Activated B cell treated with CpG ODN at 0.5 μM for 24 hours (primary cell): ENCODE measurements at regions of chr3 and their contacts with region 1.

Region 1: GRCh38 chr3:150681057-150681456 is 22.7 kb downstream of the ERICH6 start:
- DNase-seq: no peak
- ATAC-seq: peak; percentile 95
- H3K4me3 Mint-ChIP-seq: peak overlapping the region; percentile 80
- H3K27ac Mint-ChIP-seq: peak overlapping the region; percentile 66
- H3K4me1 Mint-ChIP-seq: peaks cover 29% of the 10 kb centered on the region
- H3K27me3 Mint-ChIP-seq: no peaks in the 10 kb centered on the region
- CTCF ChIP-seq: no peak

Region 2: DNA sequence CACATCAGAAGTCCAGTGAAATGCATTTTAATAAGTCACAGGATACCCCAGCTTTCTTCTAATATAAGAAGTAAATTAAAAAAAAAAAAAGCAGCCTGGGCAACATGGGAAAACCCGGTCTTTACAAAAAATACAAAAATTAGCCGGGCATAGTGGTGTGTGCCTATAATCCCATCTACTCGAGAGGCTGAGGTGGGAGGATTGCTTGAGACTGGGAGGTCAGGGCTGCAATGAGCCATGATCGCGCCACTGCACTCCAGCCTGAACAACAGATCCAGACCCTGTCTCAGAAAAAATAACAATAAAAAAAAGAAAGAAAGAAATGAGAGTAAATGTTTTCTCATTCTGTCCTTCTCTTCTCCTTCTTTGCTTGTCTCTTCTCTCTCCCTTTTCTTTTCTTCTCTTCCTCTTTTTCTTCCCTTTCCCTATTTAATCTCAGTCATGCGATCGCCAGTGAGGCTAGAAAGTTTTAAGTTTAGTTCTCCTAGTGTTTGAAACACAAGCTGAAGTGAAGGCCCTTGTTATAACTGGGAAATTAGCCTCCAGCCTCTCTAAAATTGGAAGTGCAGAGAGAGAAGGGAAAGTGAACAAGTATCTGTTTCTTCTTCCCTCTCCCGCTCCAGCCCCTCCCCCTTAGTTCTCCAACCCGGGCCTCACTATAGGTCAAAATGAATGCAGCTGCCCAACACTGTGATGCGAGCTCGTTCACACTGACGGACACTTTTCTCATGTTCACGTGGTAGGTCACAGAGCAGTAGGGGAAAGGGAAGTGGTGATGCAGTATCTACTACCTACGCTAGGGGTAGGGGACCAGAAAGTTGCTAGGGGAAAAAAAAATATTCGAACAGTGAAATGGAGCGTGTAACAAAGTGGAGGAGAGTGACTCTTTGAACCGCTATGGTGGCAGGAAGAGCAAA is 296.5 kb before region 1 on chr3:
- CTCF ChIA-PET with region 1: no interaction called
- POLR2A ChIA-PET with region 1: no interaction called
- intact Hi-C with region 1: no loop called
- DNase-seq: peak; percentile 47
- ATAC-seq: peak; percentile 95
- H3K4me3 Mint-ChIP-seq: peak overlapping the region; percentile 84
- H3K27ac Mint-ChIP-seq: peak overlapping the region; percentile 98
- H3K4me1 Mint-ChIP-seq: peaks cover 42% of the 10 kb centered on the region
- H3K27me3 Mint-ChIP-seq: no peaks in the 10 kb centered on the region
- CTCF ChIP-seq: no peak

Region 3: GRCh38 chr3:150703299-150704134 is 22.5 kb after region 1 on chr3 and contains the start of gene ERICH6:
- CTCF ChIA-PET with region 1: interaction called, 4 read pairs
- POLR2A ChIA-PET with region 1: interaction called, 16 read pairs
- intact Hi-C with region 1: loop called (anchors 1 kb)
- DNase-seq: peak; percentile 86
- ATAC-seq: peak; percentile 93
- H3K4me3 Mint-ChIP-seq: peak within 1 kb of the TSS; percentile 97
- H3K27ac Mint-ChIP-seq: peak within 1 kb of the TSS; percentile 98
- H3K4me1 Mint-ChIP-seq: peaks cover 19% of the 10 kb centered on the region
- H3K27me3 Mint-ChIP-seq: no peaks in the 10 kb centered on the region
- CTCF ChIP-seq: no peak
- total RNA-seq, gene ERICH6: not detected in 2 replicates

Region 4: GRCh38 chr3:150755890-150756289 is 74.8 kb after region 1 on chr3:
- CTCF ChIA-PET with region 1: no interaction called
- POLR2A ChIA-PET with region 1: no interaction called
- intact Hi-C with region 1: no loop called
- DNase-seq: no peak
- ATAC-seq: no peak
- H3K4me3 Mint-ChIP-seq: no peak overlapping the region
- H3K27ac Mint-ChIP-seq: no peak overlapping the region
- H3K4me1 Mint-ChIP-seq: peaks cover 82% of the 10 kb centered on the region
- H3K27me3 Mint-ChIP-seq: no peaks in the 10 kb centered on the region
- CTCF ChIP-seq: no peak

Region 5: DNA sequence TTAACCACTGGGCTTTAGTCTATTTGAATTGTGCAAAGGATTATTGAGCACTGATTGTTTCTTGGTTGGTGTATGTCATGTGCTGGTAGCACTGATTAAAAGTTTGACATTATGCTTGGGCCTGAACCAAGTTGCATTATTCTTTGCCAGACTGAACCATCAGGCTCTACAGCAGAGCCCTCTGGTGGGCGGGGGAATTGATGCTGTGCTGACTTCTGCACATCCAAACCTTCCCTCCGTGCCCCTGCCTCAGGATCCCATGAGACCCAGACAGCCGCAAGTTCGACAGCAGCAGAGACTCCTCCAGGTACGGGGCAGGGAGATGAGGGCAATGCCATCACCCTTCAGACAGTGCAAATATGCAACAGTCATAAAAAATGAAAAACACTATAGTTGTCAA is 731.9 kb after region 1 on chr3:
- CTCF ChIA-PET with region 1: no interaction called
- POLR2A ChIA-PET with region 1: no interaction called
- intact Hi-C with region 1: no loop called
- DNase-seq: no peak
- ATAC-seq: no peak
- H3K4me3 Mint-ChIP-seq: no peak overlapping the region
- H3K27ac Mint-ChIP-seq: no peak overlapping the region
- H3K4me1 Mint-ChIP-seq: peaks cover 10% of the 10 kb centered on the region
- H3K27me3 Mint-ChIP-seq: no peaks in the 10 kb centered on the region
- CTCF ChIP-seq: no peak